MCF 10A (cell line): ENCODE measurements at regions of chr7 and their contacts with region 1.

Region 1: DNA sequence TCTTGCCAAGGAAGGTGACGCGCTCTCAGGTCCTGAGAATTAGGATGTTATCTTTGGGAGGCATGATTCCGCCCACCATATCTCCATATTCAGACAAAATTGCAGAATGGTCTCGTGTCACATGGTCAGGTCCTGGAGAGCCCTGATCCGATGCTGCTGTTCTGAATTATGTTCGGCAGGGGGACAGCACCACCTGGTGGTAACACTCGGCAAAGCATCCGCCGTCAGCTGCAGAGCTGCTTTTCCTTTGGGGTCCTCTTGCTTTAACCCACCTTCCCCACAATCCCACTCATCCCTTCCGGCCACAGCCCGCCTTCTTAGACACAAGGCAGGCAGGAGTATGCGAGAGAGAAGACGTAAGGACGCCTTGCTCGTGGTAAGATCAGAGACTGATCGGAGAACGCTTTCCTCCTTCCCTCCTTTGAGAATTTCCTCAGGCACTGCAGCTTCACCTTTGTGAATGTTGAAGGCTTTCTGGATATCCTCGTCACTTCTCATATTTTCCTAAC is 327.8 kb upstream of the C7orf33 start:
- DNase-seq: peak; percentile 44
- H3K4me3 Mint-ChIP-seq: peak overlapping the region; percentile 28
- H3K27ac Mint-ChIP-seq: no peak overlapping the region
- H3K4me1 Mint-ChIP-seq: peaks cover 8% of the 10 kb centered on the region
- H3K27me3 Mint-ChIP-seq: peaks cover 41% of the 10 kb centered on the region
- CTCF ChIP-seq: peak; percentile 87

Region 2: DNA sequence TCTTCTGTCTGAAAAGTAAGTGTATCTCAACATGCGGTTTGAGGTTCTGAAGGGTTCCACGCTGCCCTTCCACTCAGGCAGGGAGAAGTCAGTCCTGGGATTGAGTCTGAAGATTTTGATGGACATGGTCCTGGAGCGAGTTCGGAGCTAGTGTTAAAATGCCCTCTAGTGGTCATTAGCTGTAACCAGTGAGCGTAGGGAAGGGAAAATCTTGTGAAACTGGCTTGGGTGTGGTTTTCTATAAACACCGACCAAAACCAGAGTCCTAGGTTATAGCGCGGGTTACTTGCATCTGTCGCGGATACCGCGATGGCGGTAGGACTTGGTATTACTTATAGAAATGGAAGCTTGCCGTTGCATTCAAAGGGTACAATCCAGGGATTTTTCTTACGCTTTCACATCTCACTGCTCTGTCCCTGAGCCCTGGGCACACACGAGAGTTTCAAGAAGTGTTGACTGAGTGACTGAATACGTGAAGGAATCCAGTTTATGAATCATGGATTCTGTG is 20.4 kb before region 1 on chr7:
- CTCF ChIA-PET with region 1: interaction called, 35 read pairs
- POLR2A ChIA-PET with region 1: no interaction called
- intact Hi-C with region 1: no loop called
- DNase-seq: peak; percentile 76
- H3K4me3 Mint-ChIP-seq: no peak overlapping the region
- H3K27ac Mint-ChIP-seq: no peak overlapping the region
- H3K4me1 Mint-ChIP-seq: no peaks in the 10 kb centered on the region
- H3K27me3 Mint-ChIP-seq: peaks cover 89% of the 10 kb centered on the region
- CTCF ChIP-seq: peak; percentile 58

Region 3: DNA sequence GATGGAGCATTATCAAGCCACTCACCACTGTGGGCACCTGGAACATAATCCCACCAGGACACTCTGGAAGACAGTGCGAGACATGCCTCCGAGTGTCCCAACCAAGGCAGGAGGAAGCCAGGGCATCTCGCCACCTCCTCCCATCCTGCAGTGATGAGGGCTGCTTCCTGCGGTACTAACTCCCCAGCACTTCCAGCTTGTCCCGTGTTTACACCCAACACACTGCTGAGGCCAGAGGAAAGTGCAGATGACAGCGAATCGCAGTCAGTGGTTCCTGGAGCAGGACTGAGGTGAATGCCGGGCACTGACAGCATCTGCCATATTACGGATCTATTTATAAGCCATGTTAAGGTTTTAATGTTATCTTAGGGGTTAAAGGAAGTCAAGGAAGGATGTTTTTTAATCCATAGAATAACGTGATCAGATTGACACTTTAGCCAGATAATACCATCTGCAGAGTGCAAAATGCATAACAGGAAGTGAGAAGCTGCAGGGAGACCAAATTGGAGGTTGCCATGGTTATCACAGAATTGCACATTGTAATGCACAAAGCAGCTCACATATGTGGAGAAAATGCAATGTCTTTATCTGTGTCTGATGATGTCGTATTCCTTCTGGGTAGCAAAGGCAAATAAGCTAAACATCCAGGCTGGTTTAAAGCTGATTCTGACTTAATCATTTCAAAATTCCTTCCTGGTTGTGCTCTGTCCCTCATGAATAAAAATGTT is 13.7 kb after region 1 on chr7:
- CTCF ChIA-PET with region 1: interaction called, 32 read pairs
- POLR2A ChIA-PET with region 1: interaction called, 3 read pairs
- intact Hi-C with region 1: no loop called
- DNase-seq: no peak
- H3K4me3 Mint-ChIP-seq: no peak overlapping the region
- H3K27ac Mint-ChIP-seq: no peak overlapping the region
- H3K4me1 Mint-ChIP-seq: no peaks in the 10 kb centered on the region
- H3K27me3 Mint-ChIP-seq: peaks cover 82% of the 10 kb centered on the region
- CTCF ChIP-seq: no peak

Region 4: DNA sequence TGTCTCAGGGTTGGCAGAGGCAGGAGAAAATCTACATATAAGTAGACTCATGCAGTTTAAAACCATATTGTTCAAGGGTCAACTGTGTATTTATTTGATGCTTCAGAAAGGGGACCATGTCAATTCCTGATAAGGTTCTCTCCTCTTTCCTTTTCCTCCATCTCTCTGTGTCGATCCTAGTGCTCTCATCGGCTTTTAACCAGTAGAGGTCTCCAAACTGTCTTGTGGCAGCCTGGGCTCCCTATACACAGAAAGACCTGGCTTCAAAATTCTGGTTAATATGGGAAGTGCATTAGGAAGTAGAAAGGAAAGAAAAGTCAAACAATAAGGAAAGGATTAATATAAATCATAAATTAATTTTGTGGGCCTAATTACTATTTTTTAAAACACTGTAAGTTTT is 23.4 kb after region 1 on chr7:
- CTCF ChIA-PET with region 1: interaction called, 32 read pairs
- POLR2A ChIA-PET with region 1: interaction called, 3 read pairs
- intact Hi-C with region 1: loop called (anchors 2 kb)
- DNase-seq: peak; percentile 44
- H3K4me3 Mint-ChIP-seq: no peak overlapping the region
- H3K27ac Mint-ChIP-seq: no peak overlapping the region
- H3K4me1 Mint-ChIP-seq: no peaks in the 10 kb centered on the region
- H3K27me3 Mint-ChIP-seq: peaks cover 22% of the 10 kb centered on the region
- CTCF ChIP-seq: peak; percentile 47

Region 5: GRCh38 chr7:148458263-148458662 is 195.5 kb after region 1 on chr7:
- CTCF ChIA-PET with region 1: interaction called, 22 read pairs
- POLR2A ChIA-PET with region 1: no interaction called
- intact Hi-C with region 1: no loop called
- DNase-seq: no peak
- H3K4me3 Mint-ChIP-seq: no peak overlapping the region
- H3K27ac Mint-ChIP-seq: no peak overlapping the region
- H3K4me1 Mint-ChIP-seq: no peaks in the 10 kb centered on the region
- H3K27me3 Mint-ChIP-seq: no peaks in the 10 kb centered on the region
- CTCF ChIP-seq: no peak

Region 6: GRCh38 chr7:148485618-148486017 is 222.8 kb after region 1 on chr7:
- CTCF ChIA-PET with region 1: interaction called, 297 read pairs
- POLR2A ChIA-PET with region 1: interaction called, 6 read pairs
- intact Hi-C with region 1: loop called (anchors 1 kb)
- DNase-seq: peak; percentile 8
- H3K4me3 Mint-ChIP-seq: no peak overlapping the region
- H3K27ac Mint-ChIP-seq: no peak overlapping the region
- H3K4me1 Mint-ChIP-seq: no peaks in the 10 kb centered on the region
- H3K27me3 Mint-ChIP-seq: no peaks in the 10 kb centered on the region
- CTCF ChIP-seq: no peak

Region 7: GRCh38 chr7:148503875-148504487 is 241.2 kb after region 1 on chr7:
- CTCF ChIA-PET with region 1: interaction called, 17 read pairs
- POLR2A ChIA-PET with region 1: no interaction called
- intact Hi-C with region 1: no loop called
- DNase-seq: peak; percentile 42
- H3K4me3 Mint-ChIP-seq: no peak overlapping the region
- H3K27ac Mint-ChIP-seq: no peak overlapping the region
- H3K4me1 Mint-ChIP-seq: peaks cover 4% of the 10 kb centered on the region
- H3K27me3 Mint-ChIP-seq: peaks cover 22% of the 10 kb centered on the region
- CTCF ChIP-seq: peak; percentile 56